A673 (cell line): ENCODE measurements at regions of chr11 and their contacts with region 1.

Region 1: DNA sequence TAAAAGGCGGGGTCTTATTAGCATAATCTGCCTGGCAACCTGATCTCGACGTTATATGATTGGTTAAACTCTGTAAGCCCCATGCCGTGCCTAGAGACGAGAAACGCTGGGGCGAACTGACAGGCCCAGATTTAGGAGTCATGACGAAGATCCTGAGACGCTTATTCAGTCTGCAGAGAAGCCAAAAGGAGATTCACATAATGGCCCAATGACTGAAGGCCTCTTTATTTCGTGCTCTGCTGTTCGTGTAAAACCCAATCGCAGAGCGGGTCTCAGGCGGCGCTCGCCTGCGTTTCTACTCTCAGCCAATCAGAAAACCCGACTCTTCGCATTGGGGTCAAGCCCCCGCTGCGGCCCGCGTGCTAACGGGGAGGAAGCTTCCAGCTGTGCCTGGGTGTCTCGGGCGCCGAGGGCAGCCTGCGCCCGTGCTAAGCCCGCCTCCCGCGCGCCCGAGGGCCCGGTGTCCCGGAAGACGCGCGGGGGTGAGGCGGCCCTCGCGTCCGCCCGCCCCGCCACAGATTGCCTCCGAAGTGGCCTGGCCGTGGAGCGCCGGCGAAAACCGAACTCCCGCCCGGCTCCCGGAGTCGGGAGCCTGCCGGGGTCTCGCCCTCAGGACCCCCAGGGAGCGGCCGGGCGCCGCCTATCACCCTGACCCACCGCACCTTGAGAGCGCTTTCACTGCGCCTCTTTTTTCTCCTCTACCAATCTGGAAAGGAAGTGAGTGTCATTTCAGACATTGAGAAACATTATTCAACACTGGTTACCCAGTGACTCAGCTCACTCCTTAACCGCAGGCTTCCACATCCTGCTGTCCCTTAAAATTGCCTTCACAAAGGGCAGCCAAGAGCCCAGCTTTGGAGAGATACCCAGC is 446 bp upstream of the PRDM10 start:
- DNase-seq: peak; percentile 100
- H3K4me3 ChIP-seq: peak overlapping the region; percentile 63
- H3K27ac ChIP-seq: peak overlapping the region; percentile 100
- H3K4me1 ChIP-seq: peaks cover 9% of the 10 kb centered on the region
- H3K27me3 ChIP-seq: no peaks in the 10 kb centered on the region
- CTCF ChIP-seq: no peak

Region 2: GRCh38 chr11:128052912-128053641 is 1950.0 kb before region 1 on chr11:
- CTCF ChIA-PET with region 1: no interaction called
- POLR2A ChIA-PET with region 1: interaction called, 19 read pairs
- intact Hi-C with region 1: no loop called
- DNase-seq: peak; percentile 91
- H3K4me3 ChIP-seq: no peak overlapping the region
- H3K27ac ChIP-seq: peak overlapping the region; percentile 78
- H3K4me1 ChIP-seq: peaks cover 31% of the 10 kb centered on the region
- H3K27me3 ChIP-seq: no peaks in the 10 kb centered on the region
- CTCF ChIP-seq: no peak

Region 3: GRCh38 chr11:130486987-130487923 is 484.2 kb after region 1 on chr11:
- CTCF ChIA-PET with region 1: no interaction called
- POLR2A ChIA-PET with region 1: interaction called, 15 read pairs
- intact Hi-C with region 1: no loop called
- DNase-seq: no peak
- H3K4me3 ChIP-seq: no peak overlapping the region
- H3K27ac ChIP-seq: no peak overlapping the region
- H3K4me1 ChIP-seq: no peaks in the 10 kb centered on the region
- H3K27me3 ChIP-seq: no peaks in the 10 kb centered on the region
- CTCF ChIP-seq: no peak